ENCODE measurements at regions of chr12 and their contacts with region 1.

Region 1: GRCh38 chr12:54853995-54854566 is at the start of gene MUCL1:
- DNase-seq: peak; percentile 87
- ATAC-seq: peak; percentile 100
- H3K4me3 Mint-ChIP-seq: no peak within 1 kb of the TSS
- H3K27ac Mint-ChIP-seq: no peak within 1 kb of the TSS
- H3K4me1 Mint-ChIP-seq: peaks cover 22% of the 10 kb centered on the region
- H3K27me3 Mint-ChIP-seq: no peaks in the 10 kb centered on the region
- CTCF ChIP-seq: peak; percentile 94
- total RNA-seq, gene MUCL1: not detected

Region 2: DNA sequence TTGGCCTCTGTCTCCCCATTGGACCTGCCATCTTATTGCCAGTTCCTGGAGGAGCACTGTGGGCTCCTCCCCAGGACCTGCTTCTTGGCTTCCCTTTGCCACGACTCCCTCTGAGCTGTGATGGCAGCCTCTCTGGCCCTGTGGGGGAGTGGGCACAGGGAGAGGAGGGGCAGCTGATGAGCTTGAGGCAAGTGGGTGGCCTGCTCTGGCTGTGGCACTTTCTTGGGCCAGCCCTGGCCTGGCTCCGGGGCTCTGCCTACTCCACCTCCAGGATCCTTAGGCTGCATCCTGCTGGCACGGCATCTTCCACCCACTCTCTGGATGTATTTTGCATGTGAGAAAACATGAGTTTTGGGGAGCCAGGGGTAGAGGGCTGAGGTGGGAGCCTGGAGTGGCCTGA is 32.4 kb before region 1 on chr12:
- CTCF ChIA-PET with region 1: no interaction called
- POLR2A ChIA-PET with region 1: no interaction called
- intact Hi-C with region 1: no loop called
- DNase-seq: no peak
- ATAC-seq: no peak
- H3K4me3 Mint-ChIP-seq: no peak overlapping the region
- H3K27ac Mint-ChIP-seq: no peak overlapping the region
- H3K4me1 Mint-ChIP-seq: no peaks in the 10 kb centered on the region
- H3K27me3 Mint-ChIP-seq: peaks cover 2% of the 10 kb centered on the region
- CTCF ChIP-seq: no peak

Region 3: DNA sequence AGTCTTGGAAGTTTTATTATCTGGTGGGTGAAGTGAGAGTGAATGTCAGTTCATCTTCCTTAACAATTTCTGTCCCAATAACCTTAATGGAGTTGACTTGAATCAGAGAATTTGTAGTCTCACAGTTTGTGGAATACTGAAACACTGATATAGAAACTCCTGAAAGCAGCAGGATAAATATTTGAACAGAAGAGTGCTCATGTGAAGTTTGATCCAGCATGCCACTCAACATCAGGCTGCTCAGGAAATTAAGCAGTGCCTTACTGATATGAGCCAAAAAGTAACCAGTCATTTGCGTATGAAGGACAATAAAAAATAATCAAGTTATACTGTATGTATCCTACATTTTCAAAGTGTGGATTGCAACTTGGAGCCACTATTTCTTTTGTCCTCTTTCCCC is 16.0 kb after region 1 on chr12:
- CTCF ChIA-PET with region 1: interaction called, 10 read pairs
- POLR2A ChIA-PET with region 1: no interaction called
- intact Hi-C with region 1: no loop called
- DNase-seq: no peak
- ATAC-seq: no peak
- H3K4me3 Mint-ChIP-seq: no peak overlapping the region
- H3K27ac Mint-ChIP-seq: no peak overlapping the region
- H3K4me1 Mint-ChIP-seq: peaks cover 7% of the 10 kb centered on the region
- H3K27me3 Mint-ChIP-seq: peaks cover 4% of the 10 kb centered on the region
- CTCF ChIP-seq: no peak